ENCODE measurements at regions of chr10 and their contacts with region 1.

Region 1: GRCh38 chr10:72048450-72049124 is 39.8 kb downstream of the SPOCK2 start:
- DNase-seq: peak; percentile 90 to 95
- ATAC-seq: peak; percentile 90 to 95 (median 93)
- H3K4me3 ChIP-seq: no peak overlapping the region
- H3K27ac ChIP-seq: no peak overlapping the region
- H3K4me1 ChIP-seq: no peaks in the 10 kb centered on the region
- H3K27me3 ChIP-seq: no peaks in the 10 kb centered on the region
- CTCF ChIP-seq: peak; percentile 100

Region 2: GRCh38 chr10:71696628-71697326 is 351.8 kb before region 1 on chr10:
- intact Hi-C with region 1: no loop called
- DNase-seq: peak; percentile 64 to 82
- ATAC-seq: peak; percentile 72 to 78 (median 73)
- H3K4me3 ChIP-seq: no peak overlapping the region
- H3K27ac ChIP-seq: no peak overlapping the region
- H3K4me1 ChIP-seq: peaks cover 11% of the 10 kb centered on the region
- H3K27me3 ChIP-seq: peaks cover 0 to 2% (median 0%) of the 10 kb centered on the region in 3 donors
- CTCF ChIP-seq: peak; percentile 86

Region 3: DNA sequence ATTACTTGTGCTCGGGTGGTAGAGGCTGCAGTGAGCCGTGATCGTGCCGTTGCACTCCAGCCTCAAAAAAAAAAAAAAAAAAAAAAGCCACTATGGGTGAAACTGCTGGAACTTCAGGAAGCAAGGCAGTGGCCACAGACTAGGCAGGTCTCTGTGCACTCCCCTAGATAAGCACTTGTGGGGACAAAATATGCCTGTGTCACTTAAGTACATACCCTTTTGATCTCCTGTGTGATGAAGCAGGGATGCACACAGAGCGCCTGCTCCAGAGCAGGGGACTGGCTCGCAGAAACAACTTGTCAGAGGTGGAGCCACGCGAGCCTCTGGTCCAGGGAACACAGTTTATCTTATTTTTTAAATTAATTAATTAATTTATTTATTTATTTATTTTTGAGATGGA is 154.7 kb before region 1 on chr10:
- intact Hi-C with region 1: loop called in 1 of 2 experiments (anchors 1 kb)
- DNase-seq: no peak
- ATAC-seq: no peak
- H3K4me3 ChIP-seq: no peak overlapping the region
- H3K27ac ChIP-seq: no peak overlapping the region
- H3K4me1 ChIP-seq: peaks cover 5% of the 10 kb centered on the region
- H3K27me3 ChIP-seq: no peaks in the 10 kb centered on the region
- CTCF ChIP-seq: no peak

Region 4: DNA sequence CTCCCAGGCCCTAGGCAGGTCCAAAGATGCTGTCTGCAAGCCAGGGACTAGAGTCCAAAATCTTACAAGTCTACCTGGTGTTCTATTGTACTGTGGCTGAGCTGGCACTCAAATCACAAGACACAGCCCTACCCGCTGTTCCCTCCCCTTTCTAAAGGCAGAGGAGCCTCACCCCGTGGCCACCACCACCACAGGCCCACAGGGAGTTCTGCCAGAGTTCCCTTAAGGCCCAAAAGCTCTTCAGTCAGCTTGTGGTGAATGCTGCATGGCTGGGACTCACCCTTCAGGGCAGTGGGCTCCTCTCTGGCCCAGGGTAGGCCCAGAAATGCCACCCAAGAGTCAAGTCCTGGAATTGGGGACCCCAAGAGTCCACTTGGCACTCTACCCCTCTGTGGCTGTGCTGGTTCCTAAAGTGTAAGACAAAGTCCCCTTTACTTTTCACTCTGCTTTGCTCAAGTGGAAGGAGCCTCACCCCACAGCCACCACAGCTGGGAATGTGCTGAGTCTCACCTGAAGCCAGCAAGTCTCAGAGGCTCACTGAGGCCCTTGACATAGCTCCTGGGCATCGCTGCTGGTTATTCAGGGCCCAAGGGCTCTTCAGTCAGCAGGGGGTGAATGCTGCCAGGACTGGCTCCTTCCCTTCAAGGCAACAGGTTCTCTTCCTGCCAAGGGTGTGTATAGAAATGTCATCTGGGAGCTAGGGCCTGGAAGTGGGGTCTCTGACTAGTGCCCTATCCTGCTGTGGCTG is 148.7 kb before region 1 on chr10:
- intact Hi-C with region 1: loop called (anchors 1 to 5 kb)
- DNase-seq: no peak
- ATAC-seq: no peak
- H3K4me3 ChIP-seq: no peak overlapping the region
- H3K27ac ChIP-seq: no peak overlapping the region
- H3K4me1 ChIP-seq: no peaks in the 10 kb centered on the region
- H3K27me3 ChIP-seq: no peaks in the 10 kb centered on the region
- CTCF ChIP-seq: no peak

Region 5: GRCh38 chr10:71957546-71958275 is 90.9 kb before region 1 on chr10:
- intact Hi-C with region 1: loop called (anchors 1 to 2 kb)
- DNase-seq: no peak
- ATAC-seq: no peak
- H3K4me3 ChIP-seq: no peak overlapping the region
- H3K27ac ChIP-seq: no peak overlapping the region
- H3K4me1 ChIP-seq: peaks cover 10% of the 10 kb centered on the region
- H3K27me3 ChIP-seq: no peaks in the 10 kb centered on the region
- CTCF ChIP-seq: no peak

Region 6: GRCh38 chr10:71974489-71975021 is 74.0 kb before region 1 on chr10:
- intact Hi-C with region 1: loop called in 1 of 2 experiments (anchors 5 kb)
- DNase-seq: peak; percentile 82 to 89
- ATAC-seq: peak; percentile 61 to 69 (median 66)
- H3K4me3 ChIP-seq: no peak overlapping the region
- H3K27ac ChIP-seq: peak overlapping the region; percentile 87
- H3K4me1 ChIP-seq: peaks cover 73% of the 10 kb centered on the region
- H3K27me3 ChIP-seq: no peaks in the 10 kb centered on the region
- CTCF ChIP-seq: no peak

Region 7: DNA sequence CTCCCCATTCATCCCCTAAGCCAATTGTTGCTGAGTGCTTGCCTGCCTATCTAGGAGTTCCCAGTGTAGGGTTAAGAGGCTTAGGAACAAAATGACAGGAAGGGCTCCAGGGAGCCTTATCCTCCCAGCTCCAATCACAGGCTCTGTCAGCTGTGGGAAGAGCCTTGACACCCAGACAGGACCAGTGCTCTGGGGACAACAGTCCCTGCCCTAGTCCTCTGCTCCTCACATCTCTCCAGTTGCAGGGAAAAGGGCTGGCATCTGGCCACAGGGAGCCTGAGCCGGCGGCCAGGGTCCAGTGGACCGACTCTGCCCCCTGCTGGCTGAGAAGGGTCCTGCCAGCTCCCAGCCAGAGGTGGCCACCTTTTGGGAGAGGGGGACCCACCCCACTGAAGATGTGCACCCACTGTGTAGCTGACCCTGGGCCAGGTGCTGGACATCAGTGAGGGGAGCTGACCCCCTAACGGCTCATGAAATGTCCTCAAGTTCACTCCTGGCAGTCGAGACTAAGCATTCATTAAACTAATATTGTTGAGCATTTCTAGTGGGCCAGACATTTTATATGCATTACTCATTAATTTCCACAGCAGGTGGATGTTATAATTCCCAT is 288.5 kb after region 1 on chr10:
- intact Hi-C with region 1: loop called in 1 of 2 experiments (anchors 2 kb)
- DNase-seq: peak; percentile 87 to 93
- ATAC-seq: peak; percentile 15 to 59 (median 38)
- H3K4me3 ChIP-seq: no peak overlapping the region
- H3K27ac ChIP-seq: peak overlapping the region; percentile 96
- H3K4me1 ChIP-seq: peaks cover 55% of the 10 kb centered on the region
- H3K27me3 ChIP-seq: no peaks in the 10 kb centered on the region
- CTCF ChIP-seq: peak; percentile 95